ENCODE measurements at regions of chr1 and their contacts with region 1.

Region 1: DNA sequence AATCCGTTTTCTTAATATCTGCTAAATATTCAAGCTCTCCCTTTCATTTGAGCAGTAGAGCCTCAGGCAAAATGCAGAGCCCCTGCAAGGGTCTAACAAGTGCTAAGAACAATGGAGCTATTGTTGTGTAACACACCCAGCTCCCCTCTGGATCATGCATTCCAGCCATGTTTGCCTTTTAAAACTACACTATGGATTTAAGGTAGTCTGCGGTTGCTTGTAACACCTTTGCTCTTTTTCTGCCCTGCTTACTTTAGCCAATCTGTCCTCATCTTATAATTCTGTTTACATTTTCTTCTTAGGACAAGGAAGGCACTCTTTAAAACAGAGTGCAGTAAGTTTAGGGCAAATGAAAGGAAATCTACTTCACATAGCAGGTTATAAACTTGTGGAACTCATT is 60.0 kb upstream of the C1orf105 start:
- DNase-seq: peak; percentile 93
- ATAC-seq: peak; percentile 99
- H3K4me3 ChIP-seq: no peak overlapping the region
- H3K27ac ChIP-seq: no peak overlapping the region
- H3K4me1 ChIP-seq: peaks cover 34% of the 10 kb centered on the region
- H3K27me3 ChIP-seq: 0 out of 5 replicates have a peak, but pooled peaks cover 0 to 2% of the 10 kb centered on the region in 2 experiments
- CTCF ChIP-seq: no peak
- EP300 ChIP-seq: peak; percentile 80 to 86
- POLR2A ChIP-seq: no peak
- RAD21 ChIP-seq: no peak

Region 2: GRCh38 chr1:171769171-171769570 is 591.3 kb before region 1 on chr1:
- CTCF ChIA-PET with region 1: no interaction called
- POLR2A ChIA-PET with region 1: no interaction called
- in situ Hi-C with region 1: no loop called
- intact Hi-C with region 1: no loop called
- DNase-seq: no peak
- ATAC-seq: no peak
- H3K4me3 ChIP-seq: no peak overlapping the region
- H3K27ac ChIP-seq: no peak overlapping the region
- H3K4me1 ChIP-seq: no peaks in the 10 kb centered on the region
- H3K27me3 ChIP-seq: no peaks in the 10 kb centered on the region; a peak in 1 of 5 replicates
- CTCF ChIP-seq: no peak
- EP300 ChIP-seq: no peak
- POLR2A ChIP-seq: no peak
- RAD21 ChIP-seq: no peak

Region 3: DNA sequence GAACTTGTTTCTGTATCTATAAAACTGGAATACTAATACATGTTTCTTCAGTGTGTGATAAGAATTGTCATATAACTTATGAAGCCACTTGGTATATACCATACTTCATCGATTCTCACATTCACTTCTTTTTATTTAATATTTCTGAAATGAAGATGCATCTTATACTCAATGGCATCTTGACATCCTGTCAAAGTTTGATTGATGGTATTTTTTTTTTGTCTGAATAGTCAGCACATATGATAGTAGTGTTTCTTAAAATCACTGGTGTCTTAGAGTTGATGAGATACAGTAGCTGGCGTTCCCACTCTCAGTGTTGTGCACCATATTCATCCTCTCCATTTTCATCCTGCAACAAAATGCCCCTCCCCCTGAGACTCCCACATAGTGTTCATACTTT is 25.5 kb after region 1 on chr1:
- CTCF ChIA-PET with region 1: no interaction called
- POLR2A ChIA-PET with region 1: no interaction called
- in situ Hi-C with region 1: no loop called
- intact Hi-C with region 1: loop called (anchors 2 kb)
- DNase-seq: no peak
- ATAC-seq: no peak
- H3K4me3 ChIP-seq: no peak overlapping the region
- H3K27ac ChIP-seq: no peak overlapping the region
- H3K4me1 ChIP-seq: peaks cover 25% of the 10 kb centered on the region
- H3K27me3 ChIP-seq: no peaks in the 10 kb centered on the region
- CTCF ChIP-seq: no peak
- EP300 ChIP-seq: no peak
- POLR2A ChIP-seq: no peak
- RAD21 ChIP-seq: no peak

Measured in HepG2 (cell line).